CD8-positive, alpha-beta T cell (primary cell): ENCODE measurements at regions of chr7 and their contacts with region 1.

Region 1: GRCh38 chr7:56106108-56107073 is at the start of gene CHCHD2:
- DNase-seq: peak; percentile 87 to 99 (median 91)
- ATAC-seq: peak; percentile 96
- H3K4me3 ChIP-seq: peak within 1 kb of the TSS; percentile 75 to 91
- H3K4me3 Mint-ChIP-seq: peak within 1 kb of the TSS; percentile 95
- H3K27ac ChIP-seq: peak within 1 kb of the TSS; percentile 90 to 95
- H3K27ac Mint-ChIP-seq: peak within 1 kb of the TSS; percentile 98
- H3K4me1 ChIP-seq: peaks cover 20% of the 10 kb centered on the region
- H3K4me1 Mint-ChIP-seq: peaks cover 33% of the 10 kb centered on the region
- H3K27me3 ChIP-seq: no peaks in the 10 kb centered on the region
- H3K27me3 Mint-ChIP-seq: peaks cover 2% of the 10 kb centered on the region
- CTCF ChIP-seq: no peak
- total RNA-seq, gene CHCHD2: 283 to 294 TPM

Region 2: DNA sequence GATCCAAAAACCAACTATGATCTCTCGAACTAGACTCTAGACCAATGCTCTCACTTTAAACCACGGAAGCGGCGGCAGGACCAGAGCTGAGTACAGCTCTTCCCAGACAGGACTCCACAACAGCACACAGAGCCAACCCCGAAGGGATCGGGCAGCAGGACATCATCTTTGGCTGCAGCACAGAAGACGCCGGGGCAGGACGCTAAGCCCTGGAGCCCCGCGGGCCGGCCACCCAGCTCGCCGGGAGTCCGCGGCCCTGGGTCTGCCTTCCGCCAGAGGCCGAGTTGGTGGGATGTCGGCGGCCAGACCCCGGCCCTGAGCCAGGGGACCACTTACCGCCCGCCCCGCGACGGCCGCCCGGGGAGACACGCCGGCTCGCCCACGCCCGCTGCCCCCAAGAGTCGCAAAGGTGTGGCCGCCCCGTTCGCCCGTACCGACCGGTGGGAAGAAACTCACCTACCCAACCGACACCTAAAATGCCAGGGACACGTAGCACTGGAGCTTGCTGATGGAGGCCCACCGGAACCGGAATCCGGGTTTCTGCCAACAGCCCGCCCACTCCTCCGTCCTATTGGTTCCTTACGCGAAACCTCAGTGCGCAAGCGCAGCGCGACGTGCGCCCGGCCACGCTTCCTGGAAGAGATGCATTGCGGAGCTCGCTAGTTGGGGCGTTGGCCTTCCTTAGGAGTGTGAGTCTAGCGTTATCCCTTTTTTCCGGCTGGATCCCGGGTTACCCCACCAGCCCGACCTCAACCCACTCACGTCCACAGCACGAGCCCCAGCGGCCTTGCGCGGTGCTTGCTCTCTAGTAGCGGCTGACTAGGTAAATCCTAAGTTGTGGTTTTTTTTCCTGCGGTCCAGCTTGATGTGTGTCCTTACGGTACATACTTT is 1347.4 kb before region 1 on chr7 and contains the start of gene SEC61G:
- CTCF ChIA-PET with region 1: no interaction called
- POLR2A ChIA-PET with region 1: no interaction called
- intact Hi-C with region 1: loop called (anchors 1 to 2 kb)
- DNase-seq: peak; percentile 87 to 98 (median 95)
- ATAC-seq: peak; percentile 97
- H3K4me3 ChIP-seq: peak within 1 kb of the TSS; percentile 78 to 96
- H3K4me3 Mint-ChIP-seq: peak within 1 kb of the TSS; percentile 100
- H3K27ac ChIP-seq: peak within 1 kb of the TSS; percentile 74 to 90
- H3K27ac Mint-ChIP-seq: peak within 1 kb of the TSS; percentile 97
- H3K4me1 ChIP-seq: peaks cover 21% of the 10 kb centered on the region
- H3K4me1 Mint-ChIP-seq: peaks cover 46% of the 10 kb centered on the region
- H3K27me3 ChIP-seq: no peaks in the 10 kb centered on the region
- H3K27me3 Mint-ChIP-seq: peaks cover 3% of the 10 kb centered on the region
- CTCF ChIP-seq: no peak
- total RNA-seq, gene SEC61G: 50.5 to 58.0 TPM

Region 3: GRCh38 chr7:55887821-55888247 is 218.6 kb before region 1 on chr7:
- CTCF ChIA-PET with region 1: no interaction called
- POLR2A ChIA-PET with region 1: interaction called, 4 read pairs
- intact Hi-C with region 1: loop called (anchors 1 to 5 kb)
- DNase-seq: peak in 2 of 9 experiments; percentile 5 to 38
- ATAC-seq: peak; percentile 15
- H3K4me3 ChIP-seq: peak overlapping the region in 1 of 2 experiments; percentile 58
- H3K4me3 Mint-ChIP-seq: peak overlapping the region; percentile 86
- H3K27ac ChIP-seq: no peak overlapping the region
- H3K27ac Mint-ChIP-seq: peak overlapping the region; percentile 87
- H3K4me1 ChIP-seq: no peaks in the 10 kb centered on the region
- H3K4me1 Mint-ChIP-seq: peaks cover 8% of the 10 kb centered on the region
- H3K27me3 ChIP-seq: no peaks in the 10 kb centered on the region
- H3K27me3 Mint-ChIP-seq: no peaks in the 10 kb centered on the region
- CTCF ChIP-seq: no peak

Region 4: DNA sequence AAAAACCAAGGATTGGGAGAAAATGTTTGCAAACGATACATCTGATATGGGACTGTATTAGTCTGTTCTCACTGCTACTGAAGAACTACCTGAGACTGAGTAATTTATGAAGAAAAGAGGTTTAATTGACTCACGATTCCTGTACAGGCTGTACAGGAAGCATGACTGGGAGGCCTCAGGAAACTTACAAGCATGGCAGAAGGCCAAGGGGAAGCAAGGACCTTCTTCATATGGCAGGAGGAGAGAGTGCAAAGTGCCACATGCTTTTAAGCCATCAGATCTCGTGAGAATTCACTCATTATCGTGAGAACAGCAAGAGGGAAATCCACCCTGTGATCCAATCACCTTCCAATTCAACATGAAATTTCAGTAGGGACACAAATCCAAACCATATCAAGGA is 208.1 kb before region 1 on chr7:
- CTCF ChIA-PET with region 1: no interaction called
- POLR2A ChIA-PET with region 1: no interaction called
- intact Hi-C with region 1: no loop called
- DNase-seq: no peak
- ATAC-seq: no peak
- H3K4me3 ChIP-seq: no peak overlapping the region
- H3K4me3 Mint-ChIP-seq: no peak overlapping the region
- H3K27ac ChIP-seq: no peak overlapping the region
- H3K27ac Mint-ChIP-seq: no peak overlapping the region
- H3K4me1 ChIP-seq: no peaks in the 10 kb centered on the region
- H3K4me1 Mint-ChIP-seq: no peaks in the 10 kb centered on the region
- H3K27me3 ChIP-seq: no peaks in the 10 kb centered on the region
- H3K27me3 Mint-ChIP-seq: no peaks in the 10 kb centered on the region
- CTCF ChIP-seq: no peak

Region 5: DNA sequence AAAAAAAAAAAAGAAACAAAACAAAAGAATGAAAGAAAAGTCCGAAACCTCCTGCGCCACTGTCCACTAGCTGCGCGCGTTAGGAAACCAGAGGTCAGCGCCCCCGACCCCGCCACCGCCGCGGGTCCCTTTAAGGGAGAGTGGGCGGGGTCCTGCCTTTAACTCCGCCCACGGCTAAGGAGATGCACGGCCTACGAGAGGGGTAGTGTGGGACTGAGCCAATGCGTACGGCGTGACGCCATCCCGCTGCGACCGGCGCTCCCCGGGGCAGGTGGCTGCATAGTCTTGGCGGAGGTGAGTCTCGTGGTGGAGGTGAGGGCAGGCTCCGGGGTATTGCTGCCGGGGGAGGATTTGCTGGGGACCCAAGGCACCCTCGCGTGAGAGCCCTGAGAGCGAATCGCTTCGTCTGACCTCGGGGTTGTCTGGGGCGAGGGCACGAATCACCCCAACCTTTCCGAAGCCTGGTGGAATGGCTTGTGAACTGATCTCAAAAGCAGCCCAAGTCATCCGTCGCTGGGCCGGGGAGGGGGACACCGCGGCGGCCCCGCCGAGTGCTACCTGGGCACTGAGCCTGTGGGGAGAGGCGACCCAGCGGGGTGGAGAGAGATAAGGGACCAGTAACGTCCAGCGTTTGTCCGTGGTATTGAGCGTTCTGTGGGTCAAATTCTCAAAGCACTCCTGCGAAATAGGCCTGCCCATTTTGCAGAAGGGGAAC is 154.6 kb before region 1 on chr7 and contains the start of gene MRPS17:
- CTCF ChIA-PET with region 1: no interaction called
- POLR2A ChIA-PET with region 1: interaction called, 3 read pairs
- intact Hi-C with region 1: loop called (anchors 1 to 5 kb)
- DNase-seq: peak; percentile 82 to 96 (median 93)
- ATAC-seq: peak; percentile 99
- H3K4me3 ChIP-seq: peak within 1 kb of the TSS; percentile 71 to 86
- H3K4me3 Mint-ChIP-seq: peak within 1 kb of the TSS; percentile 94
- H3K27ac ChIP-seq: peak within 1 kb of the TSS; percentile 78 to 91
- H3K27ac Mint-ChIP-seq: peak within 1 kb of the TSS; percentile 97
- H3K4me1 ChIP-seq: peaks cover 6% of the 10 kb centered on the region
- H3K4me1 Mint-ChIP-seq: peaks cover 26% of the 10 kb centered on the region
- H3K27me3 ChIP-seq: no peaks in the 10 kb centered on the region
- H3K27me3 Mint-ChIP-seq: no peaks in the 10 kb centered on the region
- CTCF ChIP-seq: no peak
- total RNA-seq, gene MRPS17: 7.8 to 8.9 TPM

Region 6: GRCh38 chr7:56033671-56034432 is 72.5 kb before region 1 on chr7:
- CTCF ChIA-PET with region 1: no interaction called
- POLR2A ChIA-PET with region 1: interaction called, 3 read pairs
- intact Hi-C with region 1: loop called in 1 of 2 experiments (anchors 1 kb)
- DNase-seq: peak; percentile 46 to 85 (median 73)
- ATAC-seq: peak; percentile 99
- H3K4me3 ChIP-seq: peak overlapping the region; percentile 49 to 73
- H3K4me3 Mint-ChIP-seq: peak overlapping the region; percentile 86
- H3K27ac ChIP-seq: no peak overlapping the region
- H3K27ac Mint-ChIP-seq: peak overlapping the region; percentile 72
- H3K4me1 ChIP-seq: peaks cover 3% of the 10 kb centered on the region
- H3K4me1 Mint-ChIP-seq: peaks cover 9% of the 10 kb centered on the region
- H3K27me3 ChIP-seq: no peaks in the 10 kb centered on the region
- H3K27me3 Mint-ChIP-seq: no peaks in the 10 kb centered on the region
- CTCF ChIP-seq: no peak

Region 7: DNA sequence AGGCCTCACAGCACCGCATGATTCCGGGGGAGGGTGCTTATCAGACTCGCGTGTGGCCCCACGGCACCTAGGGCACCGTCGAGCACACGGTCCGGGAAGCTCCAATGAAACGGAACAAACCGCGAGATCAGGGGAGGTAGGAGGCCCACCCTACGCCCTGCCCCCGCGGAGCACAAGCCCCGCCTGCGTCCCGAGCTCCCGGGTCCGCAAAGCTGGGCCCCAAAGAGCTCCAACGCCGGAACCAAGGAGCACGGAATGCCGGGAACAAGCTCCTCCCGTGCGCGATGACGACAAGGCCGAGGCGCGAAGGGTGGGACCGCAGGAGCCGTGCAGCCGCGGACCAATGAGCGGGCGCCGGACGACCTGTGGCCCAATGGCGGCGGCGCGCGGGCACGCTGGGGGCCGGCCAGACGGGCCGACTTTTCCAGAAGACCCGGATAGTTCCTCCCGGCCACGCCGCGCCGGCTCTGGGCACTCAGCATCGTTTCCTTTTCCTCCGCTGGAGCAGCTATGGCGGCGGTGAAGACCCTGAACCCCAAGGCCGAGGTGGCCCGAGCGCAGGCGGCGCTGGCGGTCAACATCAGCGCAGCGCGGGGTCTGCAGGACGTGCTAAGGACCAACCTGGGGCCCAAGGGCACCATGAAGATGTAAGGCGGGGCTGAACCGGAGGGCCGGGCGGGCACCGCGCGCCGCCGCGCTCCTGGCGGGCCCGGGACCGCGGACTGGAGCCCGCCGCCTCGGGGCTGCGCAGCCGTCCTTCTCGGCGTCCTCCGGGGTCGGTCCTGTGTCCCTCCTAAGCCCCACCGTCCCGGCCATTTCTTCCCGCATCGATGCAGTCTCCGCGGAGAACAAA is 54.8 kb before region 1 on chr7 and contains the starts of genes CCT6A and PSPH:
- CTCF ChIA-PET with region 1: no interaction called
- POLR2A ChIA-PET with region 1: interaction called, 7 read pairs
- intact Hi-C with region 1: loop called (anchors 1 to 5 kb)
- DNase-seq: peak; percentile 64 to 95 (median 88)
- ATAC-seq: peak; percentile 86
- H3K4me3 ChIP-seq: peak within 1 kb of the TSS; percentile 72 to 81
- H3K4me3 Mint-ChIP-seq: peak within 1 kb of the TSS; percentile 92
- H3K27ac ChIP-seq: peak within 1 kb of the TSS; percentile 62 to 83
- H3K27ac Mint-ChIP-seq: peak within 1 kb of the TSS; percentile 95
- H3K4me1 ChIP-seq: peaks cover 29% of the 10 kb centered on the region
- H3K4me1 Mint-ChIP-seq: peaks cover 47% of the 10 kb centered on the region
- H3K27me3 ChIP-seq: no peaks in the 10 kb centered on the region
- H3K27me3 Mint-ChIP-seq: no peaks in the 10 kb centered on the region
- CTCF ChIP-seq: no peak
- total RNA-seq, gene CCT6A: 36.3 to 40.9 TPM
- total RNA-seq, gene PSPH: 0.89 to 1.1 TPM

Region 8: DNA sequence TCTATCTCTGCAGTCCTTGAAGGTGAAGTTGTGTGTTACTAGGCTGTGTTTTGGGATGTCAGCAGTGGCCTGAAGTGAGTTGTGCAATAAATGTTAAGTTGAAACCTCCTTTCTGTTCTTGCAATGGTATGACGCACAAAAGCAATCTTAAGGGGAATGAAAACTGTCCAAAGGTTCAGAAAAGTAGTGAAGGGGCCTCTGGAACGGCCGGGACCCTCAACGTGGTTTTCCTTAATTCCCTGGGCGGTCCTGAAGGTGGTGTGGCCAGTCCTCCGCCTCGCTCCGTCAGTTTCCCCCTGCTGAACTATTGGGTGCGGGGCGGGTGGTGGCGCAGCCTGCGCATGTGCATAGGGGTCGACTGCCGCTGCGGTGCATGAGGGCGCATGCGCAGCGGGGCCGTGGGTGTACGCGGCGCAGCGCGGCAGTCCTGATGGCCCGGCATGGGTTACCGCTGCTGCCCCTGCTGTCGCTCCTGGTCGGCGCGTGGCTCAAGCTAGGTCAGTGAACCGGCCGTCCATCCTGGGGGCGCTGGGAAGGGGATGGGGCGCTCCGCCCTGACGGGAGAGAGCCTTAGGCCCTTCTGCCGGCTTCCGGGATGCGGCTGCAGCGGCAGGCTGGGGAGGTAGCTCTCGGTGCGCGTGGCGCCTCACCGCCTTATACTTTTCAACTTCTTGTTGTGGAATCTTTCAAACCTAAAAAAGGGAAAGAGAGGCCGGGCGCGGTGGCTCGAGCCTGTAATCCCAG is 42.3 kb before region 1 on chr7 and contains the start of gene SUMF2:
- CTCF ChIA-PET with region 1: interaction called, 4 read pairs
- POLR2A ChIA-PET with region 1: interaction called, 21 read pairs
- intact Hi-C with region 1: loop called (anchors 1 kb)
- DNase-seq: peak; percentile 80 to 95 (median 90)
- ATAC-seq: peak; percentile 90
- H3K4me3 ChIP-seq: peak within 1 kb of the TSS; percentile 79 to 99
- H3K4me3 Mint-ChIP-seq: peak within 1 kb of the TSS; percentile 91
- H3K27ac ChIP-seq: peak within 1 kb of the TSS; percentile 86 to 88
- H3K27ac Mint-ChIP-seq: peak within 1 kb of the TSS; percentile 91
- H3K4me1 ChIP-seq: peaks cover 22% of the 10 kb centered on the region
- H3K4me1 Mint-ChIP-seq: peaks cover 28% of the 10 kb centered on the region
- H3K27me3 ChIP-seq: no peaks in the 10 kb centered on the region
- H3K27me3 Mint-ChIP-seq: no peaks in the 10 kb centered on the region
- CTCF ChIP-seq: no peak
- total RNA-seq, gene SUMF2: 97.8 to 103 TPM